PC-3 (cell line): ENCODE measurements at regions of chr12 and their contacts with region 1.

Region 1: GRCh38 chr12:79451978-79452377 is 238.8 kb downstream of the PAWR start:
- DNase-seq: peak; percentile 96
- ATAC-seq: peak; percentile 94
- H3K4me3 ChIP-seq: no peak overlapping the region
- H3K27ac ChIP-seq: peak overlapping the region; percentile 86
- H3K4me1 ChIP-seq: peaks cover 37% of the 10 kb centered on the region
- H3K27me3 ChIP-seq: no peaks in the 10 kb centered on the region
- CTCF ChIP-seq: no peak

Region 2: GRCh38 chr12:79283364-79283763 is 168.6 kb before region 1 on chr12:
- CTCF ChIA-PET with region 1: no interaction called
- POLR2A ChIA-PET with region 1: no interaction called
- intact Hi-C with region 1: no loop called
- DNase-seq: no peak
- ATAC-seq: no peak
- H3K4me3 ChIP-seq: no peak overlapping the region
- H3K27ac ChIP-seq: no peak overlapping the region
- H3K4me1 ChIP-seq: no peaks in the 10 kb centered on the region
- H3K27me3 ChIP-seq: 0 out of 2 replicates have a peak, but pooled peaks cover 3% of the 10 kb centered on the region
- CTCF ChIP-seq: no peak

Region 3: DNA sequence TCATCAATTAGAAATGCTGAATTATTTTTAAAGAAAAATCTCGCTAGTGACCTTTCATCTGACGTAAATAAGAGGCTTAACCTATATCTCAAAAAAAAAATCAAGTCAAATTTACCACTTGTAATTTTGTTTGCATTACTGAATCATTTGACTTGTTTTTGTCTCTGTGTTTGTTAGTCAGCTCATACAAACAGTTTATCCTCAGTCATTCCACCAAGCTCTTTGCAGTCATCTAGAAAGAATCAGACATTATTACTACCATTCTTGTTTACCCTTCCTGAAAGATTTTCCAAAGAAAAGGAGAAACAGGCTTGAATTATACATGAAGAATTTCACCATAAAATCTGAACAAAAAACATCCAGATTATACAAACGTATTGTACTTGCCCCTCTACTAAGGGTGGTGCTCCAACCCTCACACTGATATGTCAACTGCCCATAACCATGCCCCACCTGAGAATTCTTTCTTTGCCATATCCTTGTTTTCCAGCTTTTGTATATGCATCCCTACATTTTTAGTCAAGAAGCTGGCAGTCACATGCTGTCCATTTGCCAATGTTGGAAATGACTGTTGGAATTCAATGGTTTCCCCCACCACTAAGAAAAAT is 18.4 kb before region 1 on chr12:
- CTCF ChIA-PET with region 1: no interaction called
- POLR2A ChIA-PET with region 1: no interaction called
- intact Hi-C with region 1: loop called (anchors 2 kb)
- DNase-seq: peak; percentile 54
- ATAC-seq: peak; percentile 90
- H3K4me3 ChIP-seq: no peak overlapping the region
- H3K27ac ChIP-seq: peak overlapping the region; percentile 70
- H3K4me1 ChIP-seq: peaks cover 21% of the 10 kb centered on the region
- H3K27me3 ChIP-seq: no peaks in the 10 kb centered on the region
- CTCF ChIP-seq: no peak

Region 4: GRCh38 chr12:79597910-79598309 is 145.9 kb after region 1 on chr12:
- CTCF ChIA-PET with region 1: no interaction called
- POLR2A ChIA-PET with region 1: no interaction called
- intact Hi-C with region 1: no loop called
- DNase-seq: no peak
- ATAC-seq: no peak
- H3K4me3 ChIP-seq: no peak overlapping the region
- H3K27ac ChIP-seq: no peak overlapping the region
- H3K4me1 ChIP-seq: no peaks in the 10 kb centered on the region
- H3K27me3 ChIP-seq: no peaks in the 10 kb centered on the region
- CTCF ChIP-seq: no peak